Right lobe of liver (tissue), 6 donors: ENCODE measurements at regions of chr4 and their contacts with region 1.

Region 1: GRCh38 chr4:81351654-81352445 is 119.9 kb downstream of the RASGEF1B start:
- DNase-seq: peak; percentile 51 to 62 (median 58)
- ATAC-seq: peak; percentile 84 to 87 (median 86)
- H3K4me3 ChIP-seq: no peak overlapping the region
- H3K27ac ChIP-seq: no peak overlapping the region
- H3K4me1 ChIP-seq: no peaks in the 10 kb centered on the region
- H3K27me3 ChIP-seq: no peaks in the 10 kb centered on the region
- CTCF ChIP-seq: peak; percentile 52 to 93 (median 90)
- POLR2A ChIP-seq: no peak

Region 2: DNA sequence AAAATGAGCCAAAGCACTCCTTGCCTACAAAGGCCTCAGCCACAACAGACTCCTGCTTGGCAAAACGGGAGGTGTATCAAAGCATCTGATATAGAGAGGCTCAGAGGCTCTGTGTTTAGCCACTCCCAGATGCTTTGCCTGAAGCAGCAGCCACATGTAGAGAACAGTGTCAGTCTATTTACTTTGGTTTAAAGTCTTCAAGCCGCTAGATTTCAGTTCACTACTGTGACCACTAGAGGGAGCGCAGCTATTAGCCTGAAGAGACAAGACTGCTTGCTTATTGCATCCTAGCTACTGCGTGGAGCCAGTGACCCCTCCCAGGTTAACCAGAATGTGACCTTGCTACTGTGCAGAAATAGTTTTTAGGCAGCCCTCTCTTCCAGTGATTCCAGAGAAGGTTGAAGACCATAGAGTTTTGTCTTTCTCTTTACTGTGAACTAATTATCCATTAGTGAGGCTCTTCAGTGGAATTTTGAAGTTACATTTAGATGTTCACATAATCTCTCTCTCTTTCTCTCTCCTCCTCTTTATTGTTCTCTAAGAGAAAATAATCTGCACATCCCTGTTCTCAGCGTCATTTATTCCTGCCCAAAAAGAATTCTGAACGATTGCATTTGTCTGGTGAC is 282.0 kb before region 1 on chr4:
- intact Hi-C with region 1: loop called in 1 of 2 experiments (anchors 5 kb)
- DNase-seq: peak in 1 of 3 donors; percentile 65
- ATAC-seq: peak; percentile 99
- H3K4me3 ChIP-seq: no peak overlapping the region
- H3K27ac ChIP-seq: no peak overlapping the region
- H3K4me1 ChIP-seq: no peaks in the 10 kb centered on the region
- H3K27me3 ChIP-seq: no peaks in the 10 kb centered on the region
- CTCF ChIP-seq: peak; percentile 76 to 96 (median 92)
- POLR2A ChIP-seq: no peak

Region 3: GRCh38 chr4:81296045-81296444 is 55.8 kb before region 1 on chr4:
- intact Hi-C with region 1: no loop called
- DNase-seq: no peak
- ATAC-seq: no peak
- H3K4me3 ChIP-seq: no peak overlapping the region
- H3K27ac ChIP-seq: no peak overlapping the region
- H3K4me1 ChIP-seq: no peaks in the 10 kb centered on the region
- H3K27me3 ChIP-seq: no peaks in the 10 kb centered on the region
- CTCF ChIP-seq: no peak
- POLR2A ChIP-seq: no peak

Region 4: DNA sequence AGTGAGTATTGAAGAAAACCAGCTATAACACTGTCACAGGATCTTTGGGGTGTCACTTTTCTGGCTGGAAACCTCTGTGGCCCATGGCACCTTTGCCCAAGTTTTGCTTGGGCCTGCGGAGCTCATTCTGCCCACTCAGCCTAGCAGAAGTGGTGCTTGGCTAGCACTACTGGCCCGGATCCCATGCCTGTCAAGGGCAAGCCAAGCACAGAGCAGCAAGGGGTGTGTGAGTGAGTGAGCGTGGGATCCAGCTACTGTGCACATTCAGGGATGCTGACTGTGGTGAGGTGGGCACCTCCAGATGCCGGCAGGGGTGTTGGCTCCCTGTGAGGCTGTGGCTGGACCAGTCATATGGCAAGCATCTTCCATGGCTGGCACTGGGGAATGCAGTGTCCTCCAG is 175.3 kb after region 1 on chr4:
- intact Hi-C with region 1: no loop called
- DNase-seq: peak in 1 of 3 donors; percentile 31
- ATAC-seq: peak in 3 of 4 donors; percentile 36 to 69 (median 44)
- H3K4me3 ChIP-seq: no peak overlapping the region
- H3K27ac ChIP-seq: no peak overlapping the region
- H3K4me1 ChIP-seq: no peaks in the 10 kb centered on the region
- H3K27me3 ChIP-seq: no peaks in the 10 kb centered on the region
- CTCF ChIP-seq: no peak
- POLR2A ChIP-seq: no peak